Activated T-helper 1 cell treated with anti-CD3 and anti-CD28 coated beads, Interleukin-12 subunit alpha, Interleukin-12 subunit beta, Interleukin-2, Interleukin-4 antibody, amounts not matched to agents 30 ng/mL and 10 ng/mL and 1 ng/mL, durations not matched to agents 14 hours and 24 hours and 36 hours (primary cell): ENCODE measurements at regions of chr17 and their contacts with region 1.

Region 1: DNA sequence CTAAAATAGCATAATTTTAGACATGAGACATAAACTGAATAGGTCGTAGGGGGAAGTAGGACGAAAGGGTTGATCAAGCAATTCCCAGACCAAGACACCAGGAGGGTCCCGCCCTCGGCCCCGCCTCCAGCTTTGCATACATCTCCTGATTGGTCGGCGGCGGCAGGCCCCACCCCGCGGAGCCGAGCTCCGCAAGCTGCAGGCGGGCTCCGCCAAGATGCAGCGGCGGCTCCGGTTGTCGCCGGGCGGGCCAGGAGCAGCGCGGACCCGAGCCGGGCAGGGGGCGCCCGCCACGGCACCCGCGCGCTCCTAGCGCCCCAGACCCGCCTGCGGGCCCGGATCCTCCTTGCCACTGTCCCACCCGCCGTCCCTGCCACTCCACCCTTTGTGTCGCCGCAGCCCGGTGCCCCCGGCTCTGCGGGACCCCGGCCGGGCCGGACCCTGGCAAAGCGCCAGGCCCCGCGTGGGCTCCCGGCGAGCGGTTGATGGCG is at the start of gene CDR2L:
- DNase-seq: peak; percentile 89
- H3K4me3 Mint-ChIP-seq: peak within 1 kb of the TSS; percentile 83
- H3K27ac Mint-ChIP-seq: no peak within 1 kb of the TSS
- H3K4me1 Mint-ChIP-seq: peaks cover 7% of the 10 kb centered on the region
- H3K27me3 Mint-ChIP-seq: peaks cover 54% of the 10 kb centered on the region
- total RNA-seq, gene CDR2L: 1.1 and 1.3 TPM in 2 replicates

Region 2: GRCh38 chr17:74972107-74972972 is 15.1 kb before region 1 on chr17 and contains the start of gene HID1:
- intact Hi-C with region 1: loop called (anchors 1 kb)
- DNase-seq: peak; percentile 54
- H3K4me3 Mint-ChIP-seq: peak within 1 kb of the TSS; percentile 80
- H3K27ac Mint-ChIP-seq: peak within 1 kb of the TSS; percentile 31
- H3K4me1 Mint-ChIP-seq: peaks cover 6% of the 10 kb centered on the region
- H3K27me3 Mint-ChIP-seq: peaks cover 52% of the 10 kb centered on the region
- total RNA-seq, gene HID1: 0.29 and 0.31 TPM in 2 replicates

Region 3: GRCh38 chr17:75012346-75013091 is 25.1 kb after region 1 on chr17 and contains the start of gene MRPL58:
- intact Hi-C with region 1: loop called (anchors 1 kb)
- DNase-seq: peak; percentile 75
- H3K4me3 Mint-ChIP-seq: peak within 1 kb of the TSS; percentile 95
- H3K27ac Mint-ChIP-seq: peak within 1 kb of the TSS; percentile 88
- H3K4me1 Mint-ChIP-seq: peaks cover 17% of the 10 kb centered on the region
- H3K27me3 Mint-ChIP-seq: no peaks in the 10 kb centered on the region
- total RNA-seq, gene MRPL58: 77.8 and 78.1 TPM in 2 replicates

Region 4: GRCh38 chr17:75515496-75516254 is 528.2 kb after region 1 on chr17 and contains the start of gene CASKIN2:
- intact Hi-C with region 1: no loop called
- DNase-seq: peak; percentile 62
- H3K4me3 Mint-ChIP-seq: peak within 1 kb of the TSS; percentile 78
- H3K27ac Mint-ChIP-seq: no peak within 1 kb of the TSS
- H3K4me1 Mint-ChIP-seq: peaks cover 18% of the 10 kb centered on the region
- H3K27me3 Mint-ChIP-seq: peaks cover 17% of the 10 kb centered on the region
- total RNA-seq, gene CASKIN2: 0.88 and 2.0 TPM in 2 replicates